Mammary epithelial cell (primary cell): ENCODE measurements at regions of chr13 and their contacts with region 1.

Region 1: DNA sequence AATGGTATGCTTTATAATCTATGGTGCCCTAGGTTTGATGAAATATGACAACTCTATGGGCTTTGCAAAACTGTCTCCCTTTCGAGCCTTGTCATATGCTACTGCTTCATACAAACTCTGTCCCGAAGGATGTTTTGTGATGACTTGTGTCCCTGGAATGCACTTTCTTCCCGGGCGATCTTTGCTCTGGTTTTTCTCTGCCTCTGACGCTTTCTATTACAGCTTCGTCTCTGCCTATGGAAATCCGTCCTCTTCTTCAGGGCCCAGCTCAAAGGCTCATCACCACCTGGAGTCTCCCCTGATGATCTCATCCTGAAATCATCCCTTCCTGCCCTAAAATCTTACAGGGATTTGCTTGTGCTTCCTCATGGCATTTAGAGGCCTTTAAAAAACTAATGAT is 191.6 kb upstream of the KL start:
- DNase-seq: peak; percentile 29
- H3K4me3 ChIP-seq: no peak overlapping the region
- H3K27ac ChIP-seq: peak overlapping the region; percentile 26
- H3K4me1 ChIP-seq: peaks cover 13% of the 10 kb centered on the region
- H3K27me3 ChIP-seq: peaks cover 3% of the 10 kb centered on the region
- CTCF ChIP-seq: no peak

Region 2: DNA sequence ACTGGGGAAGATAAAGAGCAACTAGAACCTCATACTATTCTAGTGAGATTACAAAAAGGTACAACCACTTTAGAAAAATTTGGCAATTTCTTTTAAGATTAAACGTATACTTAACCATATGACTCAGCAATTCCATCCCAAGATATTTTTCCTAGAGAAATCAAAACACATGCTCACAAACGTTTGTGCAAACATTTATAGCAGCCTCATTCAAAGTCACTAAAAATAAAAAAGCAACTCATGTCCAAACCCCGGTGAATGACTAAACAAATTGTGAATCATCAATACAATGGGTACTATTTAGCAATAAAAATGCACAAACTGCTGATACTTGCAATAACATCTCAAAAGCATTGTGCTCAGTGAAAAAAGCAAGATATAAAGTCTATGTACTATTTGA is 671.6 kb before region 1 on chr13:
- CTCF ChIA-PET with region 1: no interaction called
- dilution Hi-C with region 1: no loop called
- in situ Hi-C with region 1: no loop called
- intact Hi-C with region 1: no loop called
- DNase-seq: peak; percentile 72
- H3K4me3 ChIP-seq: no peak overlapping the region
- H3K27ac ChIP-seq: no peak overlapping the region
- H3K4me1 ChIP-seq: peaks cover 7% of the 10 kb centered on the region
- H3K27me3 ChIP-seq: no peaks in the 10 kb centered on the region
- CTCF ChIP-seq: no peak

Region 3: DNA sequence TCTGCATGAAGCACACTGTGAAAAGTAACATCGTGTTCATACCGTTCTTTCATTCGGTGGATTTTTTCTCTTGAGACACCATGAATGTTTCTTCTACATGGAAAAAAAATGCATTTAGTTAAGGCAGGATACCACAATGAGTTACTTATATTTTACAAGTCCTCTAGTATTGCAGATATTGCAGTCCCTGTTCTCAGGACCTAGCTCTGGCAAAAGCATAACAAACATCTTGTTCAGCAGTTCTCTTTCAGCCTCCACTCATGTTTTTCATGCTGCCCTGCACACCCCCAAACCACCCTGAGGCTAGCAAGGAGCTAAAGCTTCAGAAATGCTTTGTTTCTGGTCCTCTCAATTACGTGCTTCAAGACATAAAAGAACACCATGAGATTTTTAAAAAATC is 421.6 kb before region 1 on chr13:
- CTCF ChIA-PET with region 1: no interaction called
- dilution Hi-C with region 1: no loop called
- in situ Hi-C with region 1: no loop called
- intact Hi-C with region 1: no loop called
- DNase-seq: no peak
- H3K4me3 ChIP-seq: no peak overlapping the region
- H3K27ac ChIP-seq: no peak overlapping the region
- H3K4me1 ChIP-seq: no peaks in the 10 kb centered on the region
- H3K27me3 ChIP-seq: no peaks in the 10 kb centered on the region
- CTCF ChIP-seq: no peak

Region 4: DNA sequence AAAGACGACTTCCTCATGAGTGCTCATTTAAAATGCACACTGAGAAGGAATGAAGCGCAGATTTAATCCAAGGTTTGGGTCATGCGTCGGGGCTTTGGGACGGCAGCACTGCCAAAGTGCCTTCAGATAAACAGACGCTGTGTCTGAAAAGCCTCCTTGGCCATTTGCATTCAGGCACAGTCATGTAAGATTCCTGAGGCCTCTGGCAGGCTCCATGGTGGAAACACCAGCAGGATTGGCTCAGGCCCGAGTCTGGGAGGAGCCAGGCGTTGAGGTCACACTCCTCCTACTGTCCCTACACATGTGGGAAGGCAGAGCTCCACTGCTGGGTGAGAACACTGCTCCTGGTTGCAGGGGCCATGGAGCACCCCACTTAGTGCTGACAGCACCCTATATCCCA is 78.2 kb after region 1 on chr13:
- CTCF ChIA-PET with region 1: no interaction called
- dilution Hi-C with region 1: loop called (anchors 5 kb)
- in situ Hi-C with region 1: no loop called
- intact Hi-C with region 1: no loop called
- DNase-seq: no peak
- H3K4me3 ChIP-seq: no peak overlapping the region
- H3K27ac ChIP-seq: no peak overlapping the region
- H3K4me1 ChIP-seq: peaks cover 7% of the 10 kb centered on the region
- H3K27me3 ChIP-seq: peaks cover 19% of the 10 kb centered on the region
- CTCF ChIP-seq: no peak

Region 5: DNA sequence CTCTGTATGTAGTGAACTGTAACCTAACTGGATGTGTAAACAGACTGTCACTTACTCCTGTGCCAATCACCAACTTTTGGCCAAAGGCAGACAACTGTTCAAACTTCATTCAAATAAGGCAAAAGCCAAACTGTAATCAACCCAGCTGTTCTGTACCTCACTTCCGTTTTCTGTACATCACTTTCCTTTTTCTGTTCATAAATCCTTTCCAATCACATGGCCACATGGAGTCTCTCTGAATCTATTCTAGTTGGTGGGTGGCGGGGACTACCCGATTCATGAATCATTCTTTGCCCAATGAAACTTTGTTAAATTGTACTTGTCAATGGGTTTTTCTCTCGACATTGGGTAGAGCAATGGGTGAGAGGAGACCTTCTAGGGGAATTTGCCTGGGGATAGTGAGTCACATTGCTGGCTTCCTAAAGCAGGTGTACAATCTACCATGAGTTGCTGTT is 815.0 kb after region 1 on chr13:
- CTCF ChIA-PET with region 1: no interaction called
- dilution Hi-C with region 1: no loop called
- in situ Hi-C with region 1: no loop called
- intact Hi-C with region 1: loop called (anchors 5 kb)
- DNase-seq: peak; percentile 69
- H3K4me3 ChIP-seq: no peak overlapping the region
- H3K27ac ChIP-seq: no peak overlapping the region
- H3K4me1 ChIP-seq: peaks cover 58% of the 10 kb centered on the region
- H3K27me3 ChIP-seq: no peaks in the 10 kb centered on the region
- CTCF ChIP-seq: no peak